ENCODE measurements at regions of chr1 and their contacts with region 1.

Region 1: GRCh38 chr1:197526736-197527371 is 248.4 kb downstream of the DENND1B start:
- DNase-seq: peak; percentile 48
- ATAC-seq: no peak
- H3K4me3 ChIP-seq: no peak overlapping the region
- H3K4me3 Mint-ChIP-seq: no peak overlapping the region
- H3K27ac ChIP-seq: no peak overlapping the region
- H3K27ac Mint-ChIP-seq: no peak overlapping the region
- H3K4me1 ChIP-seq: no peaks in the 10 kb centered on the region
- H3K4me1 Mint-ChIP-seq: no peaks in the 10 kb centered on the region
- H3K27me3 ChIP-seq: no peaks in the 10 kb centered on the region
- H3K27me3 Mint-ChIP-seq: no peaks in the 10 kb centered on the region
- CTCF ChIP-seq: peak; percentile 87

Region 2: DNA sequence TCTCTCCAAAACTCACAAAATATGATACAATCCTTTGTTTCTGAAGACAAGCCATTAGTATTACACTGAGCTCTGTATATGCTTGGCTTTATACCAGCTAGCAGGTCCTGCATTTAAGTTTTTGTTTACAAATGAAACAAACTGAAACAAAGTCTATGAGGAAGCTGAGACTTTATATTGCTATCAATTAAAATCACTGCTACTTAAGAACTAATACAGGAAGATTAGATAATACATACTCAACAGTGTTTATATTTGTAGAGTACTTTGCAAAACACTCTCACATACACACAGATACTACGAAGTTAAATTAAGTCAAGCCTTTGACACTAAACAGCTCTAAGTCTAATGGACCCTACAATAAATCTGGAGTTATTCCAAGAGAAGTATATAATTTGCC is 11.4 kb before region 1 on chr1:
- CTCF ChIA-PET with region 1: interaction called, 21 read pairs
- POLR2A ChIA-PET with region 1: no interaction called
- intact Hi-C with region 1: no loop called
- DNase-seq: no peak
- ATAC-seq: no peak
- H3K4me3 ChIP-seq: no peak overlapping the region
- H3K4me3 Mint-ChIP-seq: no peak overlapping the region
- H3K27ac ChIP-seq: no peak overlapping the region
- H3K27ac Mint-ChIP-seq: no peak overlapping the region
- H3K4me1 ChIP-seq: no peaks in the 10 kb centered on the region
- H3K4me1 Mint-ChIP-seq: no peaks in the 10 kb centered on the region
- H3K27me3 ChIP-seq: no peaks in the 10 kb centered on the region
- H3K27me3 Mint-ChIP-seq: no peaks in the 10 kb centered on the region
- CTCF ChIP-seq: no peak

Region 3: GRCh38 chr1:197567442-197567841 is 40.6 kb after region 1 on chr1:
- CTCF ChIA-PET with region 1: no interaction called
- POLR2A ChIA-PET with region 1: no interaction called
- intact Hi-C with region 1: no loop called
- DNase-seq: no peak
- ATAC-seq: no peak
- H3K4me3 ChIP-seq: no peak overlapping the region
- H3K4me3 Mint-ChIP-seq: no peak overlapping the region
- H3K27ac ChIP-seq: no peak overlapping the region
- H3K27ac Mint-ChIP-seq: no peak overlapping the region
- H3K4me1 ChIP-seq: no peaks in the 10 kb centered on the region
- H3K4me1 Mint-ChIP-seq: no peaks in the 10 kb centered on the region
- H3K27me3 ChIP-seq: no peaks in the 10 kb centered on the region
- H3K27me3 Mint-ChIP-seq: no peaks in the 10 kb centered on the region
- CTCF ChIP-seq: no peak

Region 4: GRCh38 chr1:197915862-197916499 is 389.1 kb after region 1 on chr1:
- CTCF ChIA-PET with region 1: interaction called, 11 read pairs
- POLR2A ChIA-PET with region 1: no interaction called
- intact Hi-C with region 1: no loop called
- DNase-seq: peak; percentile 61
- ATAC-seq: no peak
- H3K4me3 ChIP-seq: peak overlapping the region in 2 of 5 experiments; percentile 5 to 52
- H3K4me3 Mint-ChIP-seq: peak overlapping the region; percentile 85
- H3K27ac ChIP-seq: no peak overlapping the region
- H3K27ac Mint-ChIP-seq: no peak overlapping the region
- H3K4me1 ChIP-seq: peaks cover 87 to 96% of the 10 kb centered on the region in 2 donors
- H3K4me1 Mint-ChIP-seq: peaks cover 88% of the 10 kb centered on the region
- H3K27me3 ChIP-seq: peaks cover 0 to 99% (median 92%) of the 10 kb centered on the region in 4 experiments
- H3K27me3 Mint-ChIP-seq: peaks cover 89% of the 10 kb centered on the region
- CTCF ChIP-seq: no peak